ENCODE measurements at regions of chr6 and their contacts with region 1.

Region 1: GRCh38 chr6:112180095-112180820 is 74.1 kb downstream of the LAMA4 start:
- DNase-seq: peak; percentile 61 to 72 (median 67)
- H3K4me3 ChIP-seq: no peak overlapping the region
- H3K4me3 Mint-ChIP-seq: no peak overlapping the region
- H3K27ac ChIP-seq: no peak overlapping the region
- H3K27ac Mint-ChIP-seq: no peak overlapping the region
- H3K4me1 ChIP-seq: no peaks in the 10 kb centered on the region
- H3K4me1 Mint-ChIP-seq: no peaks in the 10 kb centered on the region
- H3K27me3 ChIP-seq: no peaks in the 10 kb centered on the region
- H3K27me3 Mint-ChIP-seq: peaks cover 14 to 28% of the 10 kb centered on the region in 2 donors

Region 2: GRCh38 chr6:112203577-112204349 is 23.5 kb after region 1 on chr6:
- CTCF ChIA-PET with region 1: no interaction called
- POLR2A ChIA-PET with region 1: no interaction called
- intact Hi-C with region 1: no loop called
- DNase-seq: no peak
- H3K4me3 ChIP-seq: no peak overlapping the region
- H3K4me3 Mint-ChIP-seq: no peak overlapping the region
- H3K27ac ChIP-seq: no peak overlapping the region
- H3K27ac Mint-ChIP-seq: no peak overlapping the region
- H3K4me1 ChIP-seq: no peaks in the 10 kb centered on the region
- H3K4me1 Mint-ChIP-seq: no peaks in the 10 kb centered on the region
- H3K27me3 ChIP-seq: no peaks in the 10 kb centered on the region
- H3K27me3 Mint-ChIP-seq: peaks cover 10 to 11% of the 10 kb centered on the region in 2 donors

Region 3: GRCh38 chr6:112311950-112312547 is 131.8 kb after region 1 on chr6:
- CTCF ChIA-PET with region 1: interaction called, 55 read pairs
- POLR2A ChIA-PET with region 1: no interaction called
- intact Hi-C with region 1: loop called (anchors 1 kb)
- DNase-seq: peak in 4 of 5 donors; percentile 20 to 35 (median 25)
- H3K4me3 ChIP-seq: no peak overlapping the region
- H3K4me3 Mint-ChIP-seq: no peak overlapping the region
- H3K27ac ChIP-seq: no peak overlapping the region
- H3K27ac Mint-ChIP-seq: no peak overlapping the region
- H3K4me1 ChIP-seq: no peaks in the 10 kb centered on the region
- H3K4me1 Mint-ChIP-seq: no peaks in the 10 kb centered on the region
- H3K27me3 ChIP-seq: no peaks in the 10 kb centered on the region
- H3K27me3 Mint-ChIP-seq: peaks cover 9 to 10% of the 10 kb centered on the region in 2 donors

Region 4: DNA sequence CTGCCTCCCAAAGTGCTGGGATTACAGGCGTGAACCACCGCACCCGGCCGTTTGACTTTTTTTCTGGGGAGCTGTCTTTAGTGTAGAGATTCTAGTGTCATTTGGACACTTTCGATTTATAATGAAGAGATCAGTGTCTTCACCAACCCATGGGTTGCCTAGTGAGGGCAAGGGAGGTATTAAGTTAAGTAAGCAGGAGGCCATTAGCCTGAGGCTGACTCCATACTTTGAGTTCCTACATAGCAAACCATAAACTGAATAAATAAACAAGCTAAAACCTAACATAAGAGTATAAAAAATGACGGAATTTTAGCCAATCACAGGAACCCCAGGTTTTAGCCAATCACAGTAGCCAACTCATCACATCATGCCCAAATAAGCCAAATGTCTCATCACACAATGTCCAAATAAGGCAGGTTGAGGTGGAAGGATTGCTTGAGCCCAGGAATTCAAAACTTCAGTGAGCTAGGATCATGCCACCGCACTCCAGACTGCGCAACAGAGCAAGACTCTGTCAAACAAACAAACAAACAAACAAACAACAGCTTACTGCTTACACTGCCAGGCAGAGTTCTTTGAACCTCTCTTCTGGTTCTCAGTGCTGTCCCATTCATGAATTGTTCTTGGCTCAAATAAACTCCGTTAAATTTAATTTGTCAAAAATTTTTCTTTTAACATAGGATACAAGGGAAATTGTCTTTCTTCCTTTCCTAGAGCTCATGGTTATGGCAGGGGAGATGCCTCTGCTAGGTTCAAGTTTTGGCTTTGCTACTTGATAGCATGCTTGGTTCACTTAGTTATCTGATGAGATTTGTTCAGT is 137.0 kb after region 1 on chr6:
- CTCF ChIA-PET with region 1: interaction called, 15 read pairs
- POLR2A ChIA-PET with region 1: no interaction called
- intact Hi-C with region 1: loop called (anchors 1 kb)
- DNase-seq: no peak
- H3K4me3 ChIP-seq: no peak overlapping the region
- H3K4me3 Mint-ChIP-seq: no peak overlapping the region
- H3K27ac ChIP-seq: no peak overlapping the region
- H3K27ac Mint-ChIP-seq: peak overlapping the region in 1 of 7 donors; percentile 9
- H3K4me1 ChIP-seq: no peaks in the 10 kb centered on the region
- H3K4me1 Mint-ChIP-seq: no peaks in the 10 kb centered on the region
- H3K27me3 ChIP-seq: no peaks in the 10 kb centered on the region
- H3K27me3 Mint-ChIP-seq: peaks cover 3% of the 10 kb centered on the region in 2 donors

Region 5: DNA sequence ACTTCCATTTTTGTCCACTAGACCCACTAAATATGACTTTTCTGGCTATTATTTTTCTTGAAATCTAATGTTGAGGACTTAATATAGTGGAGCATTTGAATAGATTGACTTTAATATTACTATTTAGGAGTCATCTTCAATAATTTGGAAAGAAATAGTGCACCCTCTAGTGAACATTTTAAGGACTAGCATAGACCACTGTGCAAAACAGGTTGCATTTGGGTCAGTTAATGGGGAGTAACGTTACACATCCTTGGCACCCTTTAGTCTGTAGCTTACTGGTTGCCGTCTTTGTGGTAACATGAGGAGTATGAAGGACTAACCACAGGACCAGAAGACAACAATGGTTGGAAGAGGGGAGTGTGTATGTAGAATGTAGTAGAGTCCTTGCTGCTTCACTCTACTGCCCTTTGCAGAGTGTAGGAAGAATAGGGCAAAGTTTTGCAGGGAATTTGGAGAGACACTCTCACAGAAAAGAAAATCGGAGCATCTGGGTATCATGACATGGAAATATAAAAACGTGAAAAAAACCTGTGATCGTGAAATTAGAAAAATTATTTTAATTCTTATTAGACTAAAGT is 192.1 kb after region 1 on chr6:
- CTCF ChIA-PET with region 1: interaction called, 3 read pairs
- POLR2A ChIA-PET with region 1: no interaction called
- intact Hi-C with region 1: loop called (anchors 2 kb)
- DNase-seq: no peak
- H3K4me3 ChIP-seq: no peak overlapping the region
- H3K4me3 Mint-ChIP-seq: no peak overlapping the region
- H3K27ac ChIP-seq: no peak overlapping the region
- H3K27ac Mint-ChIP-seq: no peak overlapping the region
- H3K4me1 ChIP-seq: no peaks in the 10 kb centered on the region
- H3K4me1 Mint-ChIP-seq: no peaks in the 10 kb centered on the region
- H3K27me3 ChIP-seq: no peaks in the 10 kb centered on the region
- H3K27me3 Mint-ChIP-seq: peaks cover 8 to 13% of the 10 kb centered on the region in 2 donors

Region 6: GRCh38 chr6:113909234-113909856 is 1729.1 kb after region 1 on chr6:
- CTCF ChIA-PET with region 1: interaction called, 45 read pairs
- POLR2A ChIA-PET with region 1: no interaction called
- intact Hi-C with region 1: loop called (anchors 1 kb)
- DNase-seq: peak in 4 of 5 donors; percentile 23 to 38 (median 31)
- H3K4me3 ChIP-seq: no peak overlapping the region
- H3K4me3 Mint-ChIP-seq: peak overlapping the region in 1 of 8 donors; percentile 45
- H3K27ac ChIP-seq: no peak overlapping the region
- H3K27ac Mint-ChIP-seq: no peak overlapping the region
- H3K4me1 ChIP-seq: no peaks in the 10 kb centered on the region
- H3K4me1 Mint-ChIP-seq: peaks cover 0 to 4% (median 3%) of the 10 kb centered on the region in 4 donors
- H3K27me3 ChIP-seq: no peaks in the 10 kb centered on the region
- H3K27me3 Mint-ChIP-seq: peaks cover 5 to 6% of the 10 kb centered on the region in 2 donors